G401 (cell line): ENCODE measurements at regions of chr12 and their contacts with region 1.

Region 1: GRCh38 chr12:113152835-113153814 is 3.6 kb downstream of the CFAP73 start:
- DNase-seq: peak; percentile 71

Region 2: DNA sequence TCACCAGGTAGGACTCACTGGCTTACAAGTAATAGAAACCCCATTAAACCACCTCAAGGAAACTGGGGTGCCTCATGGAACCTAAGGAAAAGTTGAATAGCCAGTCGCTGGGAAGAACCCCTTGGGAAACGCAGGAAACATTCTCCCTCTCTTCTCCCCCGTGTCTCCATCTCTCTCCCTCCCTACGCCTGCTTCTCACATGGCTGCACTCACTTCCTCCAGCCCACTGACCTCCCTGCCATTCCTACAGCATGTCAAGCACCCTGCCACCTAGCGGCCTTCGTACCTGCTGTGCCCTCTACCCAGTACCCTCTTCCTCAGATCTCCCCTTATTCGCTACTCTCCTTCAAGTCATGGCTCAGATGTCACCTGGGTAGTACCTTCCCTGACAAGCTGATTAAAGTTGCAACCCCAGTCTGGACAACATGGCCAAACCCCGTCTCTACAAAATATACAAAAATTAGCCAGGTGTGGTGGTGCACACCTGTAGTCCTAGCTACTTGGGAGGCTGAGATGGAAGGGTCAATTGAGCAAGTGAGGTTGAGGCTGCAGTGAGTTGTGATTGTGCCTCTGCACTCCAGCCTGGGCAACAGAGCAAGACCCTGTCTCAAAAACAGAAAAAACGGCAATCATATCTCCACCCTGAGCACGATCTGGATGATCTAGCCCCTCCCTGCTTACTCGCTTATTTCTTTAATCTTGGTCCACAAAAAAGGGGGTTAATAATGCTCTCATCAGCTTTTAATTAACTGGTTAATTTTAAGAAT is 103.0 kb before region 1 on chr12:
- in situ Hi-C with region 1: loop called (anchors 25 kb)
- DNase-seq: no peak

Region 3: DNA sequence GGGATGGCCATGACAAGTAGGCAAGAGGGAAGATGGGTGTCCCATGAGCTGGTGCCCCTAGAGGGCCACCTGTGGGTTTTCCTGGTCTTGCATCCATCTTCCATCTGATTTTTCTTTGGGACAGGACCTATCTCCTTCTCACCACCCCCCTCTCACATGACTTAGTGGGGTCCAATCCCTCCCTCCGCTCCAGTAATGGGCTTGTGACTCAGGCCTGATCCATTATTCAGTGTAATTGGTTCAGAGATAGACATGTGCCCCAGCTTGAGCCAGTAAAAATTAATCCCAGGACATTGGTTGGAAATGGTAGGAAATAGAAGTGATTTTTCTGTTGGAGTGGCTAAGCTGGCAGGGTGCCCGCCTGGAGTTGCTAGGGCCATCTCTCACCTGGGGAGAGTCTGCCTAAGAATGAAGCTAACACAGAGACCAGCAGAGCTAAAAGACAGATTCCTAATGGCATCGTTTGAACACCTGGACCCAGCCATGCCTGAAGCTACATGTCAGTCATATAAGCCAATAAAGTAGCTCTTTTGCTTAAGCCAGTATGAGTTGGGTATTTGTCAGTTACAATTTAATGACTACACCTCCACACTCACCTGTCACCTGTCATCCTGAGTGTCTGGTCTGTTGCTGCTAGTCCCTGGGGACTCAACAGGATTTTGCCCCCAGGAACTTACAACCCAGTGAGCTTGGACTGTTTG is 32.3 kb before region 1 on chr12:
- in situ Hi-C with region 1: no loop called
- DNase-seq: no peak

Region 4: GRCh38 chr12:113247123-113248055 is 94.3 kb after region 1 on chr12:
- in situ Hi-C with region 1: no loop called
- DNase-seq: no peak

Region 5: DNA sequence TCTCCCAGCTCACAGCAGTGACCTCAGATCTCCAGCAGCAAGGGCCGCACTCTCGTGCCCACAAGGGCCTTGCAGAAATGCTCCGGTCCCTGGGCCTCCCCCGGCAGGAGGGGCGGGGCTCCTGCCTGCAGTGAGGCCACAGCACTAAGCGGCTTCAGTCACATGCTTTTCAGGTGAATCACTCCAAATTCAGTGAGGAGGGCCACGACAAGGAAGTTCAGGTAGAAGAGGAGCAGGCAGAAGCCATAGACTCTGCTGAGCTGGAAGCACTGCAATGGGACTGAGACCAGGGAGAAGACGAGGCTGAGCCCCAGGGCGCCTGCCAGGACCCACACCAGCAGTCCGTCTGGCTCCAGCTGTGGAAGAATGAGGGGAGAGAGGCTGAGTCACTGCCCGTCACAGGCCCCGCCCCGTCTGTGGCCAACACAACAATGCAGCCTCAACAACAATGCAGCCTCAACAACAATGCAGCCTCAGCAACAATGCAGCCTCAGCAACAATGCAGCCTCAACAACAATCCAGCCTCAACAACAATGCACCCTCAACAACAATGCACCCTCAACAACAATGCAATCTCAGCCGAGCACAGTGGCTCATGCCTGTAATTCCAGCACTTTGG is 146.6 kb after region 1 on chr12:
- in situ Hi-C with region 1: no loop called
- DNase-seq: peak; percentile 61